ENCODE measurements at regions of chr22 and their contacts with region 1.

Region 1: GRCh38 chr22:37686002-37686982 is at the start of gene NOL12:
- DNase-seq: peak; percentile 86
- H3K4me3 ChIP-seq: peak within 1 kb of the TSS; percentile 55 to 89 (median 62)
- H3K27ac ChIP-seq: peak within 1 kb of the TSS; percentile 86 to 95 (median 90)
- H3K4me1 ChIP-seq: peaks cover 9 to 57% (median 41%) of the 10 kb centered on the region in 4 donors
- H3K27me3 ChIP-seq: no peaks in the 10 kb centered on the region
- CTCF ChIP-seq: peak in 2 of 5 experiments; percentile 11 to 25
- EP300 ChIP-seq: no peak
- POLR2A ChIP-seq: peak; percentile 78
- total RNA-seq, gene NOL12: 44.1 to 143 (median 57.2) TPM

Region 2: DNA sequence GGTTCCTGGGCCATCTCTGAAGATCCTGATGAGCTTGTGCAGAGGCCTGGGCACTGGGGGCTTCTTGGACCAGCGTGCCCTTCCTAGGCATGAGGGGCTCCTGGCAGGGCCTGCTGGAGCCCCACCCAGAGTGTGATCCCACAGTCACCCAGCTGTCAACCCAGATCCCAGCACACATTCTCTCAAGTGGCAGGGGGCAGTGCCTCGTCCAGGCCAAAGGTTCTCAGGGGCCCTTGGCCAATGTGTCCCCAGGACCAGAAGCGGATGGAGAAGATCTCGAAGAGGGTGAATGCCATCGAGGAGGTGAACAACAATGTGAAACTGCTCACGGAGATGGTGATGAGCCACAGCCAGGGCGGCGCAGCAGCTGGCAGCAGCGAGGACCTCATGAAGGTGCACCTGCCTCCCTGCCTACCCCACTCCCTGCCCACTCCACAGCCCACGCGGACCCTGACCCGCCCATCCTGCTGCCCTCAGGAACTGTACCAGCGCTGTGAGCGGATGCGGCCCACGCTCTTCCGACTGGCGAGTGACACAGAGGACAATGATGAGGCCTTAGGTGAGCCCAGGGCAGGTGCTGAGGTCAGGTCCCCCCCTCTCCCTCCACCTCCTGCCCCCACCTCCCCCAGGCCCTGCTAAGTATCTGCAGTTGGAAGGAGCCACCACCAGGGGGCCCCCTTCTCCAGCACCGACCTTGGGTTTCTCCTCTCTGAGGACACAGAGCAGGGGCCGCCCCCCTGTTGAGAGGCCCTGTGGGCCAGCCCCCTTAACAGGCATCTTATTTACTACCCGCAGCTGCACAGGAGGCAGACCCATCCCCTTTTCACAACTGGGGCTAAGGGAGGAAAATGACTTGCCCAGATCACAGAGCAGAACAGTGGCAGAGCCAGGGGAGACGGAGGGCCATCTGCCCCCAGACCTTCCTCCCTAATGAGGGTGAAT is 62.9 kb before region 1 on chr22:
- in situ Hi-C with region 1: loop called in 1 of 4 experiments (anchors 10 kb)
- intact Hi-C with region 1: no loop called
- DNase-seq: peak; percentile 76
- H3K4me3 ChIP-seq: no peak overlapping the region
- H3K27ac ChIP-seq: peak overlapping the region; percentile 68 to 91 (median 76)
- H3K4me1 ChIP-seq: peaks cover 33 to 44% (median 39%) of the 10 kb centered on the region in 4 donors
- H3K27me3 ChIP-seq: no peaks in the 10 kb centered on the region
- CTCF ChIP-seq: peak; percentile 80 to 98 (median 94)
- EP300 ChIP-seq: no peak
- POLR2A ChIP-seq: no peak

Region 3: GRCh38 chr22:37643225-37643847 is 43.0 kb before region 1 on chr22:
- in situ Hi-C with region 1: loop called in 1 of 4 experiments (anchors 5 kb)
- intact Hi-C with region 1: loop called (anchors 1 kb)
- DNase-seq: peak; percentile 93
- H3K4me3 ChIP-seq: no peak overlapping the region
- H3K27ac ChIP-seq: peak overlapping the region; percentile 89 to 93 (median 92)
- H3K4me1 ChIP-seq: peaks cover 25 to 52% (median 46%) of the 10 kb centered on the region in 4 donors
- H3K27me3 ChIP-seq: no peaks in the 10 kb centered on the region
- CTCF ChIP-seq: peak; percentile 92 to 98 (median 94)
- EP300 ChIP-seq: no peak
- POLR2A ChIP-seq: no peak

Region 4: GRCh38 chr22:37777122-37777687 is 90.9 kb after region 1 on chr22:
- in situ Hi-C with region 1: loop called in 1 of 4 experiments (anchors 25 kb)
- intact Hi-C with region 1: no loop called
- DNase-seq: peak; percentile 74
- H3K4me3 ChIP-seq: no peak overlapping the region
- H3K27ac ChIP-seq: peak overlapping the region; percentile 50 to 68 (median 58)
- H3K4me1 ChIP-seq: peaks cover 8 to 15% (median 11%) of the 10 kb centered on the region in 4 donors
- H3K27me3 ChIP-seq: no peaks in the 10 kb centered on the region
- CTCF ChIP-seq: no peak
- EP300 ChIP-seq: no peak
- POLR2A ChIP-seq: peak; percentile 5

Region 5: DNA sequence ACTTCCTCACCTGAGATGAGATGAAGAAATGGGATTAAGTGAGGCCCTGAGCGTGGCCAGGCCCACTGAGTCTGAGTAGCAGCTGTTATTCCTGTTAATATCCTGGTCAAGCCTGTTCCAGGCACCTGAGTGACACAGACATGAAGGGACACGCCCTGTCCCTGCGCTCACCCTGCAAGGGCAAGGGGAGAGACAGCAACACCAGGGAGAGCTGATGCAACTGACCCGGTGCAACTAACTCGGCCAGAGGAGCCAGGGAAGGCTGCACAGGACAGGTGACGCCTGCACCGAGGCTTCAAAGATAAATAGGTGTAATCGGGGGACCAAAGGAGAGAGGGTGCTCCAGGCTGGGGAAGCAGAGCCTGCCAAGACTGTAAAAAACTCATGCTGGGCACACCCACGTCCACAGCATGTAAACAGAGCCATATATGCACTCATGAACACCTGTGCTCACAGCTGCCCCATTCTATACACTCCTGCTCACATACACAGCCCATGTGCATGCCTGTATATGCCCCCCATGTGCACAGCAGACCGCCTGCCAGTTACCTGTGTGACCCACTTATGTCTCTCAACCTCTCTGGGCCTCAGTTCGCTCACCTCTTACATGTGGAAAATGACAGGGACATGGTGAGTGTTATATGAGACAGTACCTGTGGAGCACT is 98.7 kb after region 1 on chr22:
- in situ Hi-C with region 1: loop called in 1 of 4 experiments (anchors 25 kb)
- intact Hi-C with region 1: loop called (anchors 5 kb)
- DNase-seq: peak; percentile 84
- H3K4me3 ChIP-seq: no peak overlapping the region
- H3K27ac ChIP-seq: peak overlapping the region; percentile 76 to 87 (median 85)
- H3K4me1 ChIP-seq: peaks cover 3 to 25% (median 17%) of the 10 kb centered on the region in 4 donors
- H3K27me3 ChIP-seq: no peaks in the 10 kb centered on the region
- CTCF ChIP-seq: no peak
- EP300 ChIP-seq: peak; percentile 28
- POLR2A ChIP-seq: peak; percentile 30